ENCODE measurements at regions of chr6 and their contacts with region 1.

Region 1: GRCh38 chr6:169701954-169702839 is at the starts of genes C6orf120 and WDR27:
- DNase-seq: peak; percentile 95
- H3K4me3 Mint-ChIP-seq: peak within 1 kb of the TSS; percentile 88
- H3K27ac Mint-ChIP-seq: peak within 1 kb of the TSS; percentile 84
- H3K4me1 Mint-ChIP-seq: peaks cover 39% of the 10 kb centered on the region
- H3K27me3 Mint-ChIP-seq: no peaks in the 10 kb centered on the region
- total RNA-seq, gene C6orf120: 18.9 and 19.6 TPM in 2 replicates
- total RNA-seq, gene WDR27: 35.0 and 35.9 TPM in 2 replicates

Region 2: DNA sequence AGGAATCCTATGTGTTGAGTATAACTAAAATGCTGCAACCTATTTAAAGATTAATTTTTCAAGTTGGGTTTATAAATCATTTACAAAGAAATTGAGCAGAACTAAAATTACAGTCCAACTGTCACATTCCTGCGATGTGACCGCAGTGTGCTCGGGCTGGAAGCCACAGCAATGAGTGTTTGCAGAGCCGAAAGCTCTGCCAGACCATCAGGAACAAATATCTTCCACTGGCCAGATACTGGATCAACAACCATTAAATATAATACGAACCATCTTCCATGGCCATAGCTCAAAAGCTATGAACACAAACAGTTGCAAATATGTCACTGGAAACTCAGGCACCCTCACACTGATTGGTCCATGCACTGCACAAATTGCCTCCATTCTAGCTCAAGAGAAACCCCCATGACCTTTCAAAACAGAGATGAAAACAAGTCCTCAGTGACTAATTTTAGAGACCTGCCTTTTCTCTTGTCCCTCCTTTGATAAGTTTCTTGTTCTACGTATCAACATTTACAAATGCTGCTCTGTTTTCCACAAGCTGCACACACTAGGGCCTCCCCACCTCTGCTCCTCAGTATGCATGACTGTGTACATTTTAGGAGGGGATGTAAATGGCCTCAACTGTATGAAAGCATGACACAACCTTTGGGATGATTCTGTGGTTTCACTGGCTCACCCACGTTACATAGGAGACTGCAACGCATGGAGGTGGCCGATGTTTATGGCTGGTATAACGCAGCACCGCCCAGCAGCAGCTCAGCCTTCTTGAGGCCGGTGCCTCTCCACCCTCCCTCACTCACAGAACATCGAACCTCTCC is 172.1 kb before region 1 on chr6:
- intact Hi-C with region 1: loop called (anchors 5 kb)
- DNase-seq: peak; percentile 31
- H3K4me3 Mint-ChIP-seq: peak overlapping the region; percentile 31
- H3K27ac Mint-ChIP-seq: peak overlapping the region; percentile 75
- H3K4me1 Mint-ChIP-seq: peaks cover 19% of the 10 kb centered on the region
- H3K27me3 Mint-ChIP-seq: peaks cover 4% of the 10 kb centered on the region

Region 3: GRCh38 chr6:169723200-169723909 is 21.2 kb after region 1 on chr6:
- intact Hi-C with region 1: loop called (anchors 1 kb)
- DNase-seq: peak; percentile 59
- H3K4me3 Mint-ChIP-seq: peak overlapping the region; percentile 97
- H3K27ac Mint-ChIP-seq: peak overlapping the region; percentile 97
- H3K4me1 Mint-ChIP-seq: peaks cover 38% of the 10 kb centered on the region
- H3K27me3 Mint-ChIP-seq: peaks cover 2% of the 10 kb centered on the region

Region 4: GRCh38 chr6:169803271-169803811 is 101.1 kb after region 1 on chr6:
- intact Hi-C with region 1: no loop called
- DNase-seq: peak; percentile 25
- H3K4me3 Mint-ChIP-seq: no peak overlapping the region
- H3K27ac Mint-ChIP-seq: no peak overlapping the region
- H3K4me1 Mint-ChIP-seq: peaks cover 44% of the 10 kb centered on the region
- H3K27me3 Mint-ChIP-seq: peaks cover 57% of the 10 kb centered on the region

Region 5: GRCh38 chr6:170306324-170307079 is 604.3 kb after region 1 on chr6 and contains the start of gene FAM120B:
- intact Hi-C with region 1: loop called (anchors 2 kb)
- DNase-seq: peak; percentile 96
- H3K4me3 Mint-ChIP-seq: peak within 1 kb of the TSS; percentile 95
- H3K27ac Mint-ChIP-seq: peak within 1 kb of the TSS; percentile 91
- H3K4me1 Mint-ChIP-seq: peaks cover 23% of the 10 kb centered on the region
- H3K27me3 Mint-ChIP-seq: peaks cover 25% of the 10 kb centered on the region
- total RNA-seq, gene FAM120B: 19.6 and 21.8 TPM in 2 replicates

Region 6: GRCh38 chr6:170554013-170554795 is 852.0 kb after region 1 on chr6 and contains the start of gene TBP:
- intact Hi-C with region 1: loop called (anchors 1 kb)
- DNase-seq: peak; percentile 96
- H3K4me3 Mint-ChIP-seq: no peak within 1 kb of the TSS
- H3K27ac Mint-ChIP-seq: no peak within 1 kb of the TSS
- H3K4me1 Mint-ChIP-seq: peaks cover 34% of the 10 kb centered on the region
- H3K27me3 Mint-ChIP-seq: no peaks in the 10 kb centered on the region
- total RNA-seq, gene TBP: 26.4 and 27.8 TPM in 2 replicates